ENCODE measurements at regions of chr22 and their contacts with region 1.

Region 1: GRCh38 chr22:39496131-39496838 is 5.8 kb upstream of the MIEF1 start:
- DNase-seq: peak; percentile 75
- ATAC-seq: peak; percentile 78
- H3K4me3 Mint-ChIP-seq: no peak overlapping the region
- H3K27ac Mint-ChIP-seq: no peak overlapping the region
- H3K4me1 Mint-ChIP-seq: peaks cover 2% of the 10 kb centered on the region
- H3K27me3 Mint-ChIP-seq: peaks cover 67% of the 10 kb centered on the region
- CTCF ChIP-seq: peak; percentile 70

Region 2: DNA sequence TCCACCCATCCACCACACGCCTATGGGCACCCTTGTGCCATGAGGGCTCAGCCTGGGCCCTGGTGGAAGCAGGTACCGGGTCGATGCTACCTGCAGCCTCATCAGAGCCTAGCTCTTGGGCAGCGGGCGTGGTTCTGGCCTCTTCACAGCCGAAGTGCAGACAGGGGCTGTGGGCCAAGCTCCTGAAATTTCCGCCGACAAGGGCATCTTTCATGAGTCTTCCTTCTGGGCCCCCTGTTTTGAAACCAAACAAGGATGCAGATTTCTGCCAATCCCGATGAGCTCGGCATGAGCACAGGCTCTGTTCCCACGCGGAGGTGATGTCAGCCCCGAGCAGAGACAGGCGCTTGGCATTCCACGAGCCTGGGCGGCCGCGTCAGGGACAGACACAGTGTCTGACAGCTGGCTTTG is 62.0 kb before region 1 on chr22:
- CTCF ChIA-PET with region 1: interaction called, 10 read pairs
- POLR2A ChIA-PET with region 1: no interaction called
- DNase-seq: no peak
- ATAC-seq: no peak
- H3K4me3 Mint-ChIP-seq: no peak overlapping the region
- H3K27ac Mint-ChIP-seq: no peak overlapping the region
- H3K4me1 Mint-ChIP-seq: peaks cover 22% of the 10 kb centered on the region
- H3K27me3 Mint-ChIP-seq: no peaks in the 10 kb centered on the region
- CTCF ChIP-seq: no peak

Region 3: GRCh38 chr22:39471381-39472141 is 24.7 kb before region 1 on chr22:
- CTCF ChIA-PET with region 1: interaction called, 15 read pairs
- POLR2A ChIA-PET with region 1: no interaction called
- DNase-seq: no peak
- ATAC-seq: peak; percentile 14
- H3K4me3 Mint-ChIP-seq: no peak overlapping the region
- H3K27ac Mint-ChIP-seq: peak overlapping the region; percentile 85
- H3K4me1 Mint-ChIP-seq: peaks cover 68% of the 10 kb centered on the region
- H3K27me3 Mint-ChIP-seq: no peaks in the 10 kb centered on the region
- CTCF ChIP-seq: no peak

Region 4: GRCh38 chr22:39514373-39514973 is 18.2 kb after region 1 on chr22:
- CTCF ChIA-PET with region 1: interaction called, 41 read pairs
- POLR2A ChIA-PET with region 1: interaction called, 16 read pairs
- DNase-seq: peak; percentile 73
- ATAC-seq: no peak; the same call in 1 of the 2 replicates
- H3K4me3 Mint-ChIP-seq: no peak overlapping the region
- H3K27ac Mint-ChIP-seq: no peak overlapping the region
- H3K4me1 Mint-ChIP-seq: peaks cover 8% of the 10 kb centered on the region
- H3K27me3 Mint-ChIP-seq: peaks cover 83% of the 10 kb centered on the region
- CTCF ChIP-seq: peak; percentile 66

Region 5: DNA sequence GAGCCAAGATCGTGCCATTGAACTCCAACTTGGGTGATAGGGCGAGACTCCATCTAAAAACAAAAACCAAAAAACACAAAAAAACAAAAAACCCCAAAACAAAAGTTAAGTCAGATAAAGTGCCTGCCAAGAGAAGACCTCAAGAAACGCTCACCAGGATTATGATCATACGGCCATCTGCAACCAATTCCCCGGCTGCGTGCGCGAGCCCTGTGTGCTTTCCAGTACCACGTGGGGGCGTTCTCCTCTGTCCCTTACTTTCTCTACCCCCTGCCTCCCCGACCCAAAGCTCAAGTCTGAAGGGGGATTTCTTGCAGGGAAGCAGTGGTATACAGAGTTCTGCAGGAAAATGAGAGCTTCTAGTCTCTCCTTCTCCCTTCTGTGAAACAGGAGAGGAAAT is 46.8 kb after region 1 on chr22:
- CTCF ChIA-PET with region 1: no interaction called
- POLR2A ChIA-PET with region 1: no interaction called
- DNase-seq: peak; percentile 74
- ATAC-seq: peak; percentile 82
- H3K4me3 Mint-ChIP-seq: no peak overlapping the region
- H3K27ac Mint-ChIP-seq: no peak overlapping the region
- H3K4me1 Mint-ChIP-seq: peaks cover 18% of the 10 kb centered on the region
- H3K27me3 Mint-ChIP-seq: peaks cover 33% of the 10 kb centered on the region
- CTCF ChIP-seq: 0 out of 2 replicates have a peak, but pooled peaks have one; percentile 14

Region 6: DNA sequence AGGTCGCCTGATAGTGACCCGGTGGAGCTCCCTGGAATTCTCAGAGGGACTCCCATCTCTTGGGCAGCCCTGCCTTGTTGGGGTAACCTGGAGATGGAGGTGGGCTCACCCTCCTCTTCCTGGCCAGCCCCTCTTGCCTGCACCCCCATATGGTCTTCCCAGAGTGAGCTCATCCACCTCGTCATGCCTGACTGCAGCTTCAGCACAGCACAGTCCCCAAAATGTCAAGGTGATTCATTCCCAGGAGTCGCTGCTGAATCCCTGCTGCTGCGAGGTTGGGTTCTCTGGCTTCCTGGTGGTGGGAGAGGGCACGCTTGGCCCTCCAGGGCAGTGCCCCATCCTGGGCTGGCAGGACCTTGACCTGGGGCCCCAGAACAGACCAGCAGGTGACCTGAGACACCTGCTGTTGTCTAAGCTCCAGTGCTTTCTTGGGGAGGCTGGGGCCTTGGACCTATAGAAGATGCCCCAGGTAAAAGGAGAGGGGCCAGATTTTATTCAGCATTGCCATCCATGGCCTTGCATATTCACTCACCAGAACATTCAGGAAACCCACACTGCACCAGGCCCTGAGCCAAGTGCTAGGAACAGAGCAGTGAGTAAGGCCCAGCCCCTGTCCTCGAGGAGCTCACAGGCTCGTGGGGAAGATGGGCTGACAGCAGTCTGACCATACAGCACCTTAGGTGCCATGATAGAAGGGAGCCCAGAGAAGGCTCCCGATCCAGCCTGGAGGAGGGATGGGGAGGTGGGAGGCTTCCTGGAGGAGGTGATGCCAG is 147.2 kb after region 1 on chr22:
- CTCF ChIA-PET with region 1: no interaction called
- POLR2A ChIA-PET with region 1: no interaction called
- DNase-seq: no peak
- ATAC-seq: no peak
- H3K4me3 Mint-ChIP-seq: no peak overlapping the region
- H3K27ac Mint-ChIP-seq: no peak overlapping the region
- H3K4me1 Mint-ChIP-seq: no peaks in the 10 kb centered on the region
- H3K27me3 Mint-ChIP-seq: no peaks in the 10 kb centered on the region
- CTCF ChIP-seq: no peak

Measured in WTC11 (cell line).